ENCODE measurements at regions of chr1 and their contacts with region 1.

Region 1: GRCh38 chr1:226062558-226063223 is at the start of gene H3-3A:
- DNase-seq: peak; percentile 81 to 96
- ATAC-seq: peak; percentile 65 to 88
- H3K4me3 ChIP-seq: peak within 1 kb of the TSS; percentile 76
- H3K27ac ChIP-seq: peak within 1 kb of the TSS; percentile 98
- H3K4me1 ChIP-seq: peaks cover 26% of the 10 kb centered on the region
- CTCF ChIP-seq: no peak
- EP300 ChIP-seq: no peak
- POLR2A ChIP-seq: peak; percentile 96
- RAD21 ChIP-seq: no peak
- polyA plus RNA-seq, gene H3-3A: 366 and 457 TPM in 2 replicates

Region 2: GRCh38 chr1:225677350-225678124 is 385.2 kb before region 1 on chr1:
- CTCF ChIA-PET with region 1: no interaction called
- POLR2A ChIA-PET with region 1: no interaction called
- DNase-seq: no peak
- ATAC-seq: no peak
- H3K4me3 ChIP-seq: no peak overlapping the region
- H3K27ac ChIP-seq: no peak overlapping the region
- H3K4me1 ChIP-seq: no peaks in the 10 kb centered on the region
- CTCF ChIP-seq: no peak
- EP300 ChIP-seq: no peak
- POLR2A ChIP-seq: no peak
- RAD21 ChIP-seq: no peak

Region 3: DNA sequence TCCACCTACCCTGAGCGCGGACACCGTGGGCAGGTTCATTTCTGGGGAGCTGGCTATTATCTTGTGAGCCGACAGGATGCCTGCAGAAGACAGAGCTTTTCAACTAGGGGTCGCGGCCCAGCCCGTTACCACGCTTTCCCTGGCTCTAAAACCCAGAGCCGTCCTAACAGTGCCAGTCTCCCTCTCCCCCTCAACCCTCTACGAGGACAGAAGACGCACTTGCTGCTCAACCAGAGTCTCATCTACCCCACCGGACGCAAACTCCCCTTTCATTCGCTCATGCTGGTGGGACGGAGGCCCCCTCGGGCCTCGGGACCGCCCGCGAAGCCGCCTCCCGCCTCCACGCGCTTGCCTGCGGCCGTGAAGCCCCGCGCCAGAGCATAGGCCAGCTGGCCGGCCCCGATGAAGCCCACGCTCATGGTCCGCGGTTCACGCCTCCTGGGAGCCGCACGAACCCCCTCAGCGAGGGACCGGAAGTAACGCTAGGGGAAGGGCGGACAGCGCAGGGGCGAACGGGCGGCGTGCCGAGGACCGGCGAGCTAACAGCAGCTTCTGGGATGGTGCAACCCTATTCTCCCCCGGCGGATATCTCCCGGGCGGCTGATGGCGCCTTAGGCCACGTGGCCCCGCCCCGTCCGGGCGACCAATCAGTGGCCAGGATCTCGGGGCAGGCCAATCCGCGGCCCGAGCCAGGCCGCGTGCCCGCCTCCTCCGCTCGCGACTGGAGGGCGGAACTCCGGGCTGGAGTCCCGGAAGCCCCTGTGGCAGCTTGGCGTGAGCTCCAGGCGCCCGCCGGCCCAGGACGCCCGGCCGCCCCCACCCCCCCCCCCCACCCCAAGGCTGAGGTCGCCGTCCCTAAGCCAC is 138.8 kb before region 1 on chr1 and contains the start of gene PYCR2:
- CTCF ChIA-PET with region 1: no interaction called
- POLR2A ChIA-PET with region 1: interaction called, 10 read pairs
- DNase-seq: peak; percentile 95 to 98
- ATAC-seq: peak; percentile 97 to 99
- H3K4me3 ChIP-seq: peak within 1 kb of the TSS; percentile 89
- H3K27ac ChIP-seq: peak within 1 kb of the TSS; percentile 98 to 99
- H3K4me1 ChIP-seq: peaks cover 16% of the 10 kb centered on the region
- CTCF ChIP-seq: no peak
- EP300 ChIP-seq: no peak
- POLR2A ChIP-seq: peak; percentile 94
- RAD21 ChIP-seq: no peak
- polyA plus RNA-seq, gene PYCR2: 45.4 and 45.8 TPM in 2 replicates

Region 4: GRCh38 chr1:225954753-225955152 is 107.9 kb before region 1 on chr1:
- CTCF ChIA-PET with region 1: no interaction called
- POLR2A ChIA-PET with region 1: no interaction called
- DNase-seq: no peak
- ATAC-seq: no peak; a peak in 1 of 6 replicates
- H3K4me3 ChIP-seq: no peak overlapping the region
- H3K27ac ChIP-seq: no peak overlapping the region
- H3K4me1 ChIP-seq: no peaks in the 10 kb centered on the region
- CTCF ChIP-seq: no peak
- EP300 ChIP-seq: no peak
- POLR2A ChIP-seq: no peak
- RAD21 ChIP-seq: no peak

Region 5: GRCh38 chr1:225999227-225999911 is 63.3 kb before region 1 on chr1 and contains the start of gene SDE2:
- CTCF ChIA-PET with region 1: interaction called, 6 read pairs
- POLR2A ChIA-PET with region 1: interaction called, 132 read pairs
- DNase-seq: peak; percentile 88 to 99
- ATAC-seq: peak; percentile 94 to 96
- H3K4me3 ChIP-seq: peak within 1 kb of the TSS; percentile 66
- H3K27ac ChIP-seq: peak within 1 kb of the TSS; percentile 77 to 94
- H3K4me1 ChIP-seq: peaks cover 35% of the 10 kb centered on the region; the same call in 2 of the 3 replicates
- CTCF ChIP-seq: no peak
- EP300 ChIP-seq: no peak
- POLR2A ChIP-seq: peak; percentile 82
- RAD21 ChIP-seq: no peak
- polyA plus RNA-seq, gene SDE2: 15.6 and 24.8 TPM in 2 replicates

Region 6: GRCh38 chr1:226046240-226046639 is 16.5 kb before region 1 on chr1:
- CTCF ChIA-PET with region 1: interaction called, 8 read pairs
- POLR2A ChIA-PET with region 1: interaction called, 25 read pairs
- DNase-seq: peak in 1 of 2 experiments; percentile 46
- ATAC-seq: peak; percentile 40 to 73; a peak in 4 of 6 replicates
- H3K4me3 ChIP-seq: no peak overlapping the region
- H3K27ac ChIP-seq: peak overlapping the region; percentile 44 to 60; a peak in 2 of 6 replicates
- H3K4me1 ChIP-seq: peaks cover 19% of the 10 kb centered on the region
- CTCF ChIP-seq: no peak
- EP300 ChIP-seq: no peak
- POLR2A ChIP-seq: no peak
- RAD21 ChIP-seq: no peak

Region 7: DNA sequence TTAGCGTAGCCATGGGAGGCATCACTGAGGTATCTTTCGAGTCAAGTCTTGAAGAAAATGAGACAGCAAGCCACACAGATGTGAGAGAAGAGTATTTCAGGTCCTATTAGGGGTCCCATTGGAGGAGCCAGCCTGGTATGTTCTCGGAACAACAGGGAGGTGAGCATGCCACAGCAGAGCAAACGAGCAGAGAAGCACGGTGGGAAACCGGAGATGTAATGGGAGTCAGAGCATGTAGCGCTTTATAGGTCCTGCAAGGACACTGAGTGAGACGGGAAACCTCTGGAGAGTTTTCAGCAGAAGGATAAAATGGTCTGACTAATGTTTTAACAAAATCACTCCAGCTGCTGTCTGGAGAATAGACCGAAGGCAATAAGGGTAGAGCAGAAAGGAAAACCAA is 15.7 kb after region 1 on chr1:
- CTCF ChIA-PET with region 1: interaction called, 75 read pairs
- POLR2A ChIA-PET with region 1: interaction called, 51 read pairs
- DNase-seq: no peak
- ATAC-seq: no peak
- H3K4me3 ChIP-seq: no peak overlapping the region
- H3K27ac ChIP-seq: no peak overlapping the region
- H3K4me1 ChIP-seq: peaks cover 4% of the 10 kb centered on the region; the same call in 2 of the 3 replicates
- CTCF ChIP-seq: no peak
- EP300 ChIP-seq: no peak
- POLR2A ChIP-seq: no peak
- RAD21 ChIP-seq: no peak

Region 8: DNA sequence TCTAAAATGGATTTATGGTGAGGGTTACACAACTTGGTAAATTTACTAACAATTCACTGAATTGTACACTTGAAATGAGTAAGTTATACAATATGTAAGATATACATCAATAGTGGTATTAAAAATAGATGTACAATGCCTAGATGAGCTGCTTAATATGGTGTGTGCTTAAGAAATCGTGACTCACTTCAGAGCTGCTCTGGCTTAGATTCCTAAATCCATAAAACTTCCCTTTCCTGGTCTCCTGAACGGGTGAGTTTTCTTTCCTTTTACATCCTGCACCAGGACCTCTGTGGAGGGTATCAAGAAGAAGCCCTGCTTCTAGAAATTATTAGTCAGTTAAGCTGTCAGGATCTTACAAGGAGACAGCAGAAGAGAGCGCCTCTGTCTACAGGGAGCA is 30.3 kb after region 1 on chr1:
- CTCF ChIA-PET with region 1: interaction called, 20 read pairs
- POLR2A ChIA-PET with region 1: interaction called, 9 read pairs
- DNase-seq: no peak
- ATAC-seq: no peak
- H3K4me3 ChIP-seq: no peak overlapping the region
- H3K27ac ChIP-seq: no peak overlapping the region
- H3K4me1 ChIP-seq: no peaks in the 10 kb centered on the region
- CTCF ChIP-seq: no peak
- EP300 ChIP-seq: no peak
- POLR2A ChIP-seq: no peak
- RAD21 ChIP-seq: no peak

Region 9: GRCh38 chr1:226109829-226110248 is 47.1 kb after region 1 on chr1:
- CTCF ChIA-PET with region 1: interaction called, 48 read pairs
- POLR2A ChIA-PET with region 1: interaction called, 23 read pairs
- DNase-seq: peak; percentile 86 to 96
- ATAC-seq: peak; percentile 87 to 90
- H3K4me3 ChIP-seq: peak overlapping the region; percentile 96
- H3K27ac ChIP-seq: peak overlapping the region; percentile 95 to 97
- H3K4me1 ChIP-seq: peaks cover 9% of the 10 kb centered on the region
- CTCF ChIP-seq: no peak
- EP300 ChIP-seq: no peak
- POLR2A ChIP-seq: peak; percentile 60
- RAD21 ChIP-seq: no peak

Region 10: DNA sequence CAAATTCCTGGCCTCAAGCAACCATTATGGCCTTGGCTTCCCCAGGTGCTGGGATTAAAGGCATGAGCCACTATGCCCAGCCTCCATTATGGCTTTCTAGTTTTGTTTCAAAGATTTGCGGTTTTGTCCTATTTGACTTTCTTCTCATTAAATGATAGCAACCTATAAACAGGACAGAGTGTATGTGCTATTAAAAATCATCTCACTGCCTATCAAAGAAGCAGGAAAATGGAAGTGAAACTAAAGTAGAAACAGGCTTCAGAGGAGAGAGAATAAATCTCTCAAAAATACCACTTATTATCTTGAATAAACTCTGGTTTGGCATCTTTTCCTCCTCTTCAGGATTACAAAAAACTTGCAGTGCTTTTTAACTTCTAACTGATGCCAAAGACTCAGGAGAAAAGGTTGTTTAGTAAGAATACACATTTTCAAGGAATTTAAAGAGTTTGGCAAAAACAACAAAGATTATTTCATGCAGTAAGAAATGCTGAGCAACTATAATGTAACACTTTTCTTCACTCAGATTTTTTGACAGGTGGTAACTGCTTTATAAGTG is 95.1 kb after region 1 on chr1:
- CTCF ChIA-PET with region 1: no interaction called
- POLR2A ChIA-PET with region 1: no interaction called
- DNase-seq: no peak
- ATAC-seq: no peak
- H3K4me3 ChIP-seq: no peak overlapping the region
- H3K27ac ChIP-seq: no peak overlapping the region
- H3K4me1 ChIP-seq: no peaks in the 10 kb centered on the region
- CTCF ChIP-seq: no peak
- EP300 ChIP-seq: no peak
- POLR2A ChIP-seq: no peak
- RAD21 ChIP-seq: no peak

Measured in A549 (cell line).